ENCODE measurements at regions of chr13 and their contacts with region 1.

Region 1: DNA sequence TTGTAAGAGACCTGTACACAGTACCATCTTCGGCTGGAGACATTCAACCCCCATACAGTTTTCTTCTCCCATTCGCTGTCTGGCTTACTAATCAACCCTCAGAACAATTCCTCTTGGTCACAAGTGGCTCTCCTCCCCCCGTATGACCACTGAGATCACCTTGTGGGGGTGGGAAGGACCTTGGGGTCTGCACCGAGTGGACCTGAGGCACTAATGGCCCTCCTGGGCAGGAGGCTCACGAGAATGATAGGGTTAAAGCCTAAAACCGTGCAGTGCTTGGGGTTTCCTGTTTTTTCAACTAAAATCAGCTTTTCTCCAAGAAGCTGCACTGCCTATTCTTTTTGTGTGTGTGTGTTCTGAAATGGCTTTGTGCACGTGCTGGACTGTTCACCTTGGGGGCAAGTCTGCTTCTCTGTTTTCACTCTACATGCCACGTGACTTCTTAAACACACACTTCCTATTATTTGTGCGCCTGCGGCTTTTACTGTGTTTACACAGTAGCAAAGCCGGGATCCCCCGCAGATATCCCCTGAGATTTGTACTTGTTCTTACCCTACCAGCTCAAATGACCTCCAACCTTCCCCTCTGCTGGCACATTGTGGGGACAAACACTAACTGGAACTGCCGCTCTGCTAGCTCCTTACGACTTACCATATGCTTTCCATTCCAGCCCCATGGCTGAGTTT is 12.3 kb downstream of the RBM26 start:
- DNase-seq: peak; percentile 47
- ATAC-seq: peak; percentile 57
- H3K4me3 Mint-ChIP-seq: peak overlapping the region; percentile 71
- H3K27ac Mint-ChIP-seq: peak overlapping the region; percentile 20
- H3K4me1 Mint-ChIP-seq: peaks cover 41% of the 10 kb centered on the region
- H3K27me3 Mint-ChIP-seq: no peaks in the 10 kb centered on the region

Region 2: GRCh38 chr13:79405829-79406596 is 12.3 kb after region 1 on chr13 and contains the start of gene RBM26:
- POLR2A ChIA-PET with region 1: interaction called, 18 read pairs
- DNase-seq: peak; percentile 91
- ATAC-seq: peak; percentile 89
- H3K4me3 Mint-ChIP-seq: peak within 1 kb of the TSS; percentile 91
- H3K27ac Mint-ChIP-seq: peak within 1 kb of the TSS; percentile 96
- H3K4me1 Mint-ChIP-seq: peaks cover 35% of the 10 kb centered on the region
- H3K27me3 Mint-ChIP-seq: no peaks in the 10 kb centered on the region
- total RNA-seq, gene RBM26: 64.8 to 66.1 TPM